ENCODE measurements at regions of chr4 and their contacts with region 1.

Region 1: DNA sequence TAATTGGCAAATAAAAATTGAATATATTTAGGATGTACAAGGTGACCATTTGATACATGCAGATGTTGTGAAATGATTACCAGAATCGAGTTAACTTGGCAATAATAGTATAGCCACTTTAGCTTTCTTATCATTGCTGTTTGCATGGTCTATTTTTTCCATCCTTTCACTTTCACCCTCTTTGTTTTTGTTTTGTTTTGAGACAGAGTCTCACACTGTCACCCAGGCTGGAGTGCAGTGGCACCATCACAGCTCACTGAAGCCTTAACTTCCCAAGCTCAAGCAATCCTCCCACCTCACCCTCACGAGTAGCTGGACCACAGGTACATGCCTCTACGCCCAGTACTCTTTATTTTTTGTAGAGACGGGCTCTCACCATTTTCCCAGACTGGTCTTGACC is 218.6 kb upstream of the ADGRL3 start:
- DNase-seq: no peak
- H3K4me3 ChIP-seq: no peak overlapping the region
- H3K27ac ChIP-seq: no peak overlapping the region
- H3K4me1 ChIP-seq: no peaks in the 10 kb centered on the region
- H3K27me3 ChIP-seq: no peaks in the 10 kb centered on the region
- CTCF ChIP-seq: no peak

Region 2: GRCh38 chr4:60992037-60992436 is 10.5 kb after region 1 on chr4:
- CTCF ChIA-PET with region 1: no interaction called
- POLR2A ChIA-PET with region 1: no interaction called
- intact Hi-C with region 1: loop called (anchors 2 kb)
- DNase-seq: no peak
- H3K4me3 ChIP-seq: no peak overlapping the region
- H3K27ac ChIP-seq: no peak overlapping the region
- H3K4me1 ChIP-seq: no peaks in the 10 kb centered on the region
- H3K27me3 ChIP-seq: no peaks in the 10 kb centered on the region
- CTCF ChIP-seq: no peak

Measured in PC-9 (cell line).